Ascending aorta (tissue), 2 donors: ENCODE measurements at regions of chr17 and their contacts with region 1.

Region 1: DNA sequence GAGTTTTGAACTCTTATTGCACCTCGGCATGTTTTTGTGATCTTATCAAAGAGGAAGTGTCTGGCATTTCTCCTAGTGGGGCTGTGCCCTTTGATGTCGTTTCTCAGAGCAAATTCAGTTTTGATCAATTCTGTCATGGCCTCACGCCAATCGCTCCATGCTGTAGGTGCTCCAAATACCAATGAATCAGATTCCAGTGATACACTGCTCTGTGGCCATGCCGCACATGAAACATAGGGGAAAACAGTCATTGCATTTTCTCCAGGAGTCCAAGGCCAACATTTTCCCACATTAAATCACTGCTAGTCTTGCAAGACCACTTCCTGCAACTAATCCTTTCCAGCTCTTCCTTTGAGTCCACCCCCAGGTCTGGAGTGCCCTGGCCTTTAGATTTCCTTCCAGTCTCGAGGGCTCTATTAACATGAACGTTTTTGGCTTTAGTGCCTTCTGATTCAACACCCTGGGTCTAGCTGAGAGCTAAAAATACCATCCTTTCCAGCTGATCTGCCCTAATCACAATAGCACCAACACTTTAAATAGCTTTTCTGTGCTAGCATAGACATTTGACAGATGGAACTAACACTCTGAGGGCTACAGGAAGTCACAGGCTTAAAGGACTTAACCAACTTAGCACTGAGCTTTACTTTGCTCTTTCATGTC is 18.2 kb upstream of the RASL10B start:
- DNase-seq: peak; percentile 37 to 91
- H3K4me3 ChIP-seq: peak overlapping the region in 1 of 2 donors; percentile 14
- H3K27ac ChIP-seq: peak overlapping the region; percentile 74 to 85
- H3K4me1 ChIP-seq: peaks cover 12 to 41% of the 10 kb centered on the region in 2 donors
- H3K27me3 ChIP-seq: no peaks in the 10 kb centered on the region
- CTCF ChIP-seq: no peak

Region 2: GRCh38 chr17:34254651-34255380 is 1458.4 kb before region 1 on chr17 and contains the start of gene CCL2:
- intact Hi-C with region 1: loop called (anchors 5 kb)
- DNase-seq: peak in 1 of 2 donors; percentile 86
- H3K4me3 ChIP-seq: peak within 1 kb of the TSS; percentile 46 to 56
- H3K27ac ChIP-seq: peak within 1 kb of the TSS; percentile 87 to 89
- H3K4me1 ChIP-seq: peaks cover 39 to 60% of the 10 kb centered on the region in 2 donors
- H3K27me3 ChIP-seq: no peaks in the 10 kb centered on the region
- CTCF ChIP-seq: no peak
- total RNA-seq, gene CCL2: 162 TPM

Region 3: DNA sequence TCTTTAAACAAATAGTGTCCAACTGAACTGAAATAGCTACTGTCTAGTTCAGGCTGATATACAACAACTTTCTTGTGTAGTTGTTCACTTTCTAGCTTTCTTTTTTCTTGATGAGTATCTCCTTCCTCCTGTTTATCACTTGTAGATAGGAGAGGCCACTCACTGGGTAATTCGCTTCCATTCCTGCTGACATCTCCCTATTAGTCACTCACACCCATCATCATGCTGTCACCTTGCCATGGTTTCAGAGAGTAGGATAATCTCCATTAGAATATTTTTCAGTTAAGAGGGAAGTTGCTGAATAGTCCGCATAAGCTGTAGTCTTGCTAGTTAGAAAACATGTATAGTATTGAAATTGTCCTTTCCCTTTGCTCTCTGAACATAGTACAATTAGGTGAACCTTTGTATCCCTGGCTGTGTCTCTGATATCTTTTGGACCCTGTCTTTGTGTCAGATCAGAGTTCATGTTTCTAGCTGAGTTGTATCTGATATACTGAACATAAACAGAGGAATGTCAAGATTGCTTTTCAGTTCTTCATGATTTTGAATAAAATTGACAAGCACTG is 46.1 kb before region 1 on chr17:
- intact Hi-C with region 1: no loop called
- DNase-seq: no peak
- H3K4me3 ChIP-seq: no peak overlapping the region
- H3K27ac ChIP-seq: no peak overlapping the region
- H3K4me1 ChIP-seq: no peaks in the 10 kb centered on the region
- H3K27me3 ChIP-seq: no peaks in the 10 kb centered on the region
- CTCF ChIP-seq: no peak

Region 4: GRCh38 chr17:35700150-35700549 is 13.0 kb before region 1 on chr17:
- intact Hi-C with region 1: loop called (anchors 2 kb)
- DNase-seq: peak; percentile 17 to 75
- H3K4me3 ChIP-seq: no peak overlapping the region
- H3K27ac ChIP-seq: peak overlapping the region in 1 of 2 donors; percentile 7
- H3K4me1 ChIP-seq: peaks cover 0 to 12% of the 10 kb centered on the region in 2 donors
- H3K27me3 ChIP-seq: no peaks in the 10 kb centered on the region
- CTCF ChIP-seq: no peak